ENCODE measurements at regions of chr19 and their contacts with region 1.

Region 1: GRCh38 chr19:29858000-29858596 is 46.3 kb downstream of the CCNE1 start:
- DNase-seq: peak; percentile 62
- ATAC-seq: peak; percentile 78
- H3K4me3 Mint-ChIP-seq: no peak overlapping the region
- H3K27ac Mint-ChIP-seq: no peak overlapping the region
- H3K4me1 Mint-ChIP-seq: no peaks in the 10 kb centered on the region
- H3K27me3 Mint-ChIP-seq: peaks cover 10% of the 10 kb centered on the region

Region 2: GRCh38 chr19:29745253-29745652 is 112.8 kb before region 1 on chr19:
- CTCF ChIA-PET with region 1: no interaction called
- DNase-seq: no peak
- ATAC-seq: no peak
- H3K4me3 Mint-ChIP-seq: no peak overlapping the region
- H3K27ac Mint-ChIP-seq: no peak overlapping the region
- H3K4me1 Mint-ChIP-seq: no peaks in the 10 kb centered on the region
- H3K27me3 Mint-ChIP-seq: peaks cover 10% of the 10 kb centered on the region

Region 3: GRCh38 chr19:29844891-29845572 is 13.1 kb before region 1 on chr19:
- CTCF ChIA-PET with region 1: interaction called, 17 read pairs
- DNase-seq: peak; percentile 96
- ATAC-seq: peak; percentile 85
- H3K4me3 Mint-ChIP-seq: peak overlapping the region; percentile 86
- H3K27ac Mint-ChIP-seq: peak overlapping the region; percentile 87
- H3K4me1 Mint-ChIP-seq: peaks cover 14% of the 10 kb centered on the region
- H3K27me3 Mint-ChIP-seq: peaks cover 24% of the 10 kb centered on the region

Region 4: GRCh38 chr19:29887442-29887855 is 29.4 kb after region 1 on chr19:
- CTCF ChIA-PET with region 1: interaction called, 10 read pairs
- DNase-seq: peak; percentile 54
- ATAC-seq: peak; percentile 84
- H3K4me3 Mint-ChIP-seq: no peak overlapping the region
- H3K27ac Mint-ChIP-seq: no peak overlapping the region
- H3K4me1 Mint-ChIP-seq: peaks cover 22% of the 10 kb centered on the region
- H3K27me3 Mint-ChIP-seq: no peaks in the 10 kb centered on the region